ENCODE measurements at regions of chr1 and their contacts with region 1.

Region 1: GRCh38 chr1:206469933-206470691 is at the start of gene IKBKE:
- H3K4me3 Mint-ChIP-seq: peak within 1 kb of the TSS; percentile 83
- H3K27ac Mint-ChIP-seq: peak within 1 kb of the TSS; percentile 82
- H3K4me1 Mint-ChIP-seq: peaks cover 88% of the 10 kb centered on the region
- H3K27me3 Mint-ChIP-seq: peaks cover 6% of the 10 kb centered on the region

Region 2: GRCh38 chr1:206663832-206664652 is 193.9 kb after region 1 on chr1:
- intact Hi-C with region 1: loop called (anchors 10 kb)
- H3K4me3 Mint-ChIP-seq: no peak overlapping the region
- H3K27ac Mint-ChIP-seq: no peak overlapping the region
- H3K4me1 Mint-ChIP-seq: peaks cover 55% of the 10 kb centered on the region
- H3K27me3 Mint-ChIP-seq: peaks cover 65% of the 10 kb centered on the region

Region 3: GRCh38 chr1:207203541-207203940 is 733.4 kb after region 1 on chr1:
- intact Hi-C with region 1: no loop called
- H3K4me3 Mint-ChIP-seq: no peak overlapping the region
- H3K27ac Mint-ChIP-seq: no peak overlapping the region
- H3K4me1 Mint-ChIP-seq: peaks cover 33% of the 10 kb centered on the region
- H3K27me3 Mint-ChIP-seq: peaks cover 24% of the 10 kb centered on the region